ENCODE measurements at regions of chr5 and their contacts with region 1.

Region 1: GRCh38 chr5:61055434-61056006 is 106.7 kb downstream of the SMIM15 start:
- DNase-seq: no peak
- ATAC-seq: peak in 1 of 8 donors; percentile 41
- H3K4me3 ChIP-seq: no peak overlapping the region
- H3K27ac ChIP-seq: no peak overlapping the region
- H3K4me1 ChIP-seq: no peaks in the 10 kb centered on the region
- H3K27me3 ChIP-seq: no peaks in the 10 kb centered on the region
- CTCF ChIP-seq: peak; percentile 27 to 75 (median 65)

Region 2: GRCh38 chr5:60463179-60463868 is 592.2 kb before region 1 on chr5:
- intact Hi-C with region 1: no loop called
- DNase-seq: peak in 1 of 2 donors; percentile 4
- ATAC-seq: peak in 1 of 8 donors; percentile 17
- H3K4me3 ChIP-seq: no peak overlapping the region
- H3K27ac ChIP-seq: no peak overlapping the region
- H3K4me1 ChIP-seq: peaks cover 0 to 3% (median 0%) of the 10 kb centered on the region in 9 donors
- H3K27me3 ChIP-seq: no peaks in the 10 kb centered on the region
- CTCF ChIP-seq: no peak

Region 3: DNA sequence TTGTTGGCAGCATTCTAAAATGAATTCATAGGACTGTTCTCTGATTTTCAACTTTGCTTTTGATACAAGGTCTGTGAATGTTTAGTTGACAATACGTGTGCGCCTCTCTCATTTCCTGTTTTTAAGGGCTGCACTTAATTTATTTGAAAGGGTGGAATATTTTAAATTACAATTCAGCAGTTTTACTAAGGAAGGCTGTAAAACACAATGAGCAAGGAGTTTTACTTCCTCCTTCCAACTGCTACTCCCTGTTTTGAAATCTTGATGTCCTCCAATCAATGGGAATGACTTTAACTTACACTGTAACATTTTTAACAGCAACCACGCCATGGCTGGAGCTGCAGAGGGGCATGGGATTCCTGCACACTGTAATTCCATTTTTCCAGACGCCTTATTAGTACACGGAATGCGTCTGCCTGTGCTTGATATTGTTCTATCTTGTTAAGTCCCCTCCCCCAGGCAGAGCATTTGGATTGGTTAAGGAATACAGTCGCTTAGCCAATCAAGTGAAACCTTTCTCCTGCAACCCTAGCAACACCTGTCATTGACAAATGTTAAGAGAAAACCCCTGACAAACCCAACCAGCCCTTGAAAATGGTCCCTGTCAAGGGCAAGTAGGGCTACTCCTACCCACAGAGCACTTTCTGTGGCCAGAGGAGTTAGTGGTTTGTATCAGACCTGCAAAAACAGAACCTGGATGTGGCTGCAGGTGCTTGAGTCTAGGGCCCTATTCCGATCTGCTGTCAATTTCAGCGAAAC is 264.0 kb after region 1 on chr5:
- intact Hi-C with region 1: loop called in 2 of 10 experiments (anchors 10 kb)
- DNase-seq: no peak
- ATAC-seq: peak; percentile 51 to 79 (median 62)
- H3K4me3 ChIP-seq: peak overlapping the region in 3 of 10 donors; percentile 2 to 22 (median 22)
- H3K27ac ChIP-seq: peak overlapping the region in 5 of 10 donors; percentile 6 to 85 (median 49)
- H3K4me1 ChIP-seq: peaks cover 0 to 62% (median 6%) of the 10 kb centered on the region in 9 donors
- H3K27me3 ChIP-seq: no peaks in the 10 kb centered on the region
- CTCF ChIP-seq: no peak

Region 4: DNA sequence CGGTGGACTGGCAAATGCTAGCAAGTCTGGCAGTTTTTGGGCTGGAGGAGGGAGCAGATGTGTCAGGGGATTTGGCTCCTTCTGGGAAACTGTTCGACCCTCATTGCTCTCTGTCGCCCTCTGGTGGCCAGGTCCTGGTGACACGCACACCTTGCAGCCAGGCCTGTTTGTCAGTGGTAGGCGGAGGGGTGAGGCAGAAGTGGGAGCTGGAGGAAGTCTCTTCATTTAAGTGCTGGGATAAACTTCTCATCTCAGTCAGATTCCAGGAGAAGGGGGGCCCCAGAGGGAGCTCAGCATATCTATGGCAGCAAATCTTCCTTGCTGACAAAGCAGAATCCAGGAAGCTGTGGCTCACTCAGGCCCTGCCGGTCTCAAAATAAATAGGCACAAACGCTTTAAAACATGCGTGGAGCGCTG is 603.1 kb after region 1 on chr5:
- intact Hi-C with region 1: loop called in 6 of 10 experiments (anchors 5 to 10 kb)
- DNase-seq: peak; percentile 88
- ATAC-seq: peak; percentile 82 to 95 (median 92)
- H3K4me3 ChIP-seq: peak overlapping the region in 6 of 10 donors; percentile 1 to 35 (median 27)
- H3K27ac ChIP-seq: peak overlapping the region in 6 of 10 donors; percentile 25 to 62 (median 40)
- H3K4me1 ChIP-seq: peaks cover 0 to 8% (median 0%) of the 10 kb centered on the region in 9 donors
- H3K27me3 ChIP-seq: no peaks in the 10 kb centered on the region
- CTCF ChIP-seq: peak; percentile 88 to 97 (median 93)

Region 5: GRCh38 chr5:61933787-61934626 is 878.5 kb after region 1 on chr5:
- intact Hi-C with region 1: loop called in 1 of 10 experiments (anchors 10 kb)
- DNase-seq: peak in 1 of 2 donors; percentile 8
- ATAC-seq: peak in 3 of 8 donors; percentile 51 to 67 (median 64)
- H3K4me3 ChIP-seq: no peak overlapping the region
- H3K27ac ChIP-seq: no peak overlapping the region
- H3K4me1 ChIP-seq: no peaks in the 10 kb centered on the region
- H3K27me3 ChIP-seq: no peaks in the 10 kb centered on the region
- CTCF ChIP-seq: peak; percentile 36 to 74 (median 65)